Stomach (tissue), 19 donors: ENCODE measurements at regions of chr12 and their contacts with region 1.

Region 1: GRCh38 chr12:63276537-63277365 is 125.8 kb upstream of the AVPR1A start:
- DNase-seq: peak; percentile 61 to 73
- H3K4me3 ChIP-seq: no peak overlapping the region
- H3K27ac ChIP-seq: no peak overlapping the region
- H3K4me1 ChIP-seq: no peaks in the 10 kb centered on the region
- H3K27me3 ChIP-seq: no peaks in the 10 kb centered on the region
- CTCF ChIP-seq: peak in 5 of 7 experiments; percentile 24 to 64 (median 35)
- EP300 ChIP-seq: no peak
- POLR2A ChIP-seq: no peak

Region 2: DNA sequence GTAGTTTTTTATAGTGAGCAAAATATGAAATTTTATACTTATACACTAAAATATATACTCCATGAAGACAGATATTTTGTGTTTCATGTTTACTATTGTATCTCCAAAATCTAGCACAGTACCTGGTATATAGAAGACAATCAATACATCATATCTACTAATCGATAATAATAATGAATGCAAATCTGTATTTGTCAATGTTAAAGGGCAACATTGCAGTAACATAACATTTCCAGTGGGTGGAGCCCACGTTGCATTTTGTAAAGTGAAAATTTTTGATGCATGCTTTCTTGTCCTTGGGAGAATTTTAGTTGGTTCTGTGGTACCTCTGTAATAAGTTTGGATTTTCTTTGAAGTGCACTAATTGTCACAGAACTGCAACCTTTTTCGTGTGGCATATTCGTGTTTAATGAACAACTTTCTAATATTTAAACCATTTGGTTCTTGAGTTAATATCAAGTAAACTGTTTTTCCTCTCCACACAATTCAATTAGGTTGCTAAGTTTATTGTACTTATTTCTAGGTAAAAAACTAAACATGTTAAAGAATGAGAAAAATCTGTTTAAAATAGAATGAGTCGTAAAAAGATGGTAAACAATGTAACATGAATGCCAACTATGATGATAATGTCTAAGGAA is 173.1 kb before region 1 on chr12:
- intact Hi-C with region 1: loop called (anchors 10 kb)
- DNase-seq: peak in 1 of 2 donors; percentile 59
- H3K4me3 ChIP-seq: no peak overlapping the region
- H3K27ac ChIP-seq: no peak overlapping the region
- H3K4me1 ChIP-seq: no peaks in the 10 kb centered on the region
- H3K27me3 ChIP-seq: no peaks in the 10 kb centered on the region
- CTCF ChIP-seq: peak in 5 of 7 experiments; percentile 55 to 79 (median 72)
- EP300 ChIP-seq: no peak
- POLR2A ChIP-seq: no peak